ENCODE measurements at regions of chr15 and their contacts with region 1.

Region 1: GRCh38 chr15:89760303-89761008 is 9.4 kb upstream of the MESP1 start:
- DNase-seq: peak in 4 of 5 donors; percentile 43 to 53 (median 50)
- H3K4me3 ChIP-seq: no peak overlapping the region
- H3K4me3 Mint-ChIP-seq: no peak overlapping the region
- H3K27ac ChIP-seq: no peak overlapping the region
- H3K27ac Mint-ChIP-seq: peak overlapping the region in 1 of 7 donors; percentile 68
- H3K4me1 ChIP-seq: no peaks in the 10 kb centered on the region
- H3K4me1 Mint-ChIP-seq: no peaks in the 10 kb centered on the region
- H3K27me3 ChIP-seq: no peaks in the 10 kb centered on the region
- H3K27me3 Mint-ChIP-seq: peaks cover 0 to 14% of the 10 kb centered on the region in 2 donors

Region 2: DNA sequence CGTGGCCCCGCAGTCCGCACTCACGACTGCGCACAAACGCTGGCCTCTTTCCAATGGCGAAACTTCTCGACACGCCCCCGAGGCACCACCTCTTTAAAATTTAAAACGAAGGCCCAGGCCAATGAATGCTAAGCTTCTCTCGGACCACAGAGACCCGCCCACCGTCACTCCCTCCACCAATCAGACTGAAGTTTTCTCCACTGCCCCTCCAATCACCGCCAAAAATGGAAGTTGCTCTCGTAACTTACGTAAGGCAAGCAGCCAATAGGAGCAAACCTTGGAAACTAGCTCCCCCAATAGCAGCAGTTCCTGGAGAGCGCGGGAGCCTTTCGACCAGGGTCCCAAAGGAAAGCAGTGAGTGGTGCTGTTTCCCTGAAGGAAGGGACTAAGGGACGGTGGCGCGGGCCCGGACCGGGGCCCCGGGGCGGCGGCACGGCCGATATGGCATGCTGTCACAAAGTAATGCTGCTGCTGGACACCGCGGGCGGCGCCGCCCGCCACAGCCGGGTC is 185.3 kb before region 1 on chr15 and contains the start of gene TICRR:
- CTCF ChIA-PET with region 1: no interaction called
- POLR2A ChIA-PET with region 1: no interaction called
- intact Hi-C with region 1: no loop called
- DNase-seq: peak; percentile 97 to 98 (median 98)
- H3K4me3 ChIP-seq: peak within 1 kb of the TSS; percentile 74 to 88
- H3K4me3 Mint-ChIP-seq: peak within 1 kb of the TSS; percentile 83 to 95 (median 90)
- H3K27ac ChIP-seq: no peak within 1 kb of the TSS
- H3K27ac Mint-ChIP-seq: peak within 1 kb of the TSS; percentile 5 to 94 (median 81)
- H3K4me1 ChIP-seq: peaks cover 10% of the 10 kb centered on the region
- H3K4me1 Mint-ChIP-seq: peaks cover 11 to 19% (median 13%) of the 10 kb centered on the region in 4 donors
- H3K27me3 ChIP-seq: no peaks in the 10 kb centered on the region
- H3K27me3 Mint-ChIP-seq: peaks cover 8 to 11% of the 10 kb centered on the region in 2 donors
- total RNA-seq, gene TICRR: 0.12 to 0.14 TPM

Region 3: DNA sequence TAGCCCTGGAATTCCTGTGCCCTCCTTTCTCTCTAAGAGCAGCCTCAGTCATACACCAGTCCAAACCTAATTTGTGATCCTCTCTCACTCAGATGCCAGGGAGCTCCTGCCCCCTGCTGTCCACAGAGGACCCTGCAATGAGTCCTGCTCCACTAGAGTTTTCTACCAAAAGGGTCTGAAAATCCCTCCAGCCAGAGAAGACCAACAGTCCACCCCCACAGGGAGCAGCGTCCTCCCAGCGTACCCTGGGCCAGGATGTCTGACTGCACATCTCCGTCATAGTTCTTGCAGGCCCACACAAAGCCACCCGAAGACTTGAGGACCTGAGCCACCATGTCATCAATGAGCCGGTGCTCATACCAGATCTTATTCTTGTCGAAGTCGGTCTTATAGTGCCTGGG is 326.4 kb after region 1 on chr15:
- CTCF ChIA-PET with region 1: interaction called, 6 read pairs
- POLR2A ChIA-PET with region 1: no interaction called
- intact Hi-C with region 1: loop called (anchors 5 kb)
- DNase-seq: peak in 2 of 5 donors; percentile 45 to 50
- H3K4me3 ChIP-seq: no peak overlapping the region
- H3K4me3 Mint-ChIP-seq: peak overlapping the region in 1 of 8 donors; percentile 2
- H3K27ac ChIP-seq: no peak overlapping the region
- H3K27ac Mint-ChIP-seq: peak overlapping the region; percentile 56 to 86 (median 72)
- H3K4me1 ChIP-seq: no peaks in the 10 kb centered on the region
- H3K4me1 Mint-ChIP-seq: peaks cover 6 to 24% (median 7%) of the 10 kb centered on the region in 4 donors
- H3K27me3 ChIP-seq: no peaks in the 10 kb centered on the region
- H3K27me3 Mint-ChIP-seq: no peaks in the 10 kb centered on the region

Measured in CD4-positive, alpha-beta memory T cell (primary cell).